ENCODE measurements at regions of chr1 and their contacts with region 1.

Region 1: DNA sequence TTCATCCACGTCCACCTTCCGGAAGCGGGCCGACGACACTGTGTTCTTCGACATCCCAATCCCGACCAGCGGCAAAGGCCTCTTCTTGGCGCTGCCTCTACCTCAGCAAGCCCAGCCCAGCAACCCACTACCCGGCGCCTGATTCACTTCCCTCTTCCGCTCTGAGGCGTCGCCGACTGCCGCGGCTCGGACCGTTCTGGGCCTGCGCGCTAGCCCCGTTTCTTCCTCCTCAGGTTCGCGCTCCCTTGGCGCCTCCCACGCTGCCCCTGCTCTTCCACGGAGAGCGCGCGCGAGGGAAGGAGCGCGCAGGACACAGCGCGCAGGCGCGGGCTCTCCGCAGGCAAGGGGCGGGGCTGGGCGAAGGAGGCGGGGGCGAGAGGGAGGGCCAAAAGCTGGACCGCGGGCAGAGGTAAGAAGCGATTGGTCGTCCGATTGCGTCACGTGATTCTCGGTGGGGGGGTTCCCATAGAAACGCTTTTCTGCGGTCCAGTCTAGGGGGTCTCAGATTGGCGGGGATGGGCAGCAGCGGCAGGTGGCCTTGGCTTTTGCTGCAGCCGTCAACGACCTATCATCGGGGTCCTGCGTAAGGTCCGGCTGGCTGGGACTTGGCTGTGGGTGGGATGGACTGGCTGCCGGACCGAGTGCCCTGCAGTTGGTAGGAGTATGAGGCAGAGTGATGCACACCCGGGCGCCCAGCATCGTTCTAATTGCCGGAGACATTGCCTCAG is at the start of gene ARPC5:
- DNase-seq: peak; percentile 95
- ATAC-seq: peak; percentile 86
- H3K4me3 ChIP-seq: peak within 1 kb of the TSS; percentile 93
- H3K27ac ChIP-seq: peak within 1 kb of the TSS; percentile 96
- H3K4me1 ChIP-seq: 0 out of 2 replicates have a peak, but pooled peaks cover 3% of the 10 kb centered on the region
- H3K27me3 ChIP-seq: no peaks in the 10 kb centered on the region
- CTCF ChIP-seq: no peak
- EP300 ChIP-seq: no peak
- POLR2A ChIP-seq: peak; percentile 93
- RAD21 ChIP-seq: no peak
- polyA plus RNA-seq, gene ARPC5: 246 to 274 TPM

Region 2: GRCh38 chr1:183646776-183647175 is 11.0 kb after region 1 on chr1:
- CTCF ChIA-PET with region 1: interaction called, 81 read pairs
- POLR2A ChIA-PET with region 1: interaction called, 21 read pairs
- RAD21 ChIA-PET with region 1: interaction called, 56 read pairs
- SMC1A ChIA-PET with region 1: interaction called, 70 read pairs
- in situ Hi-C with region 1: no loop called
- intact Hi-C with region 1: no loop called
- DNase-seq: no peak
- ATAC-seq: peak; percentile 43
- H3K4me3 ChIP-seq: no peak overlapping the region
- H3K27ac ChIP-seq: no peak overlapping the region
- H3K4me1 ChIP-seq: peaks cover 6% of the 10 kb centered on the region
- H3K27me3 ChIP-seq: no peaks in the 10 kb centered on the region
- CTCF ChIP-seq: no peak
- EP300 ChIP-seq: no peak
- POLR2A ChIP-seq: no peak
- RAD21 ChIP-seq: no peak

Region 3: GRCh38 chr1:183777328-183777727 is 141.6 kb after region 1 on chr1:
- CTCF ChIA-PET with region 1: no interaction called
- POLR2A ChIA-PET with region 1: no interaction called
- RAD21 ChIA-PET with region 1: no interaction called
- SMC1A ChIA-PET with region 1: no interaction called
- in situ Hi-C with region 1: no loop called
- intact Hi-C with region 1: no loop called
- DNase-seq: no peak
- ATAC-seq: no peak
- H3K4me3 ChIP-seq: no peak overlapping the region
- H3K27ac ChIP-seq: no peak overlapping the region
- H3K4me1 ChIP-seq: no peaks in the 10 kb centered on the region
- H3K27me3 ChIP-seq: no peaks in the 10 kb centered on the region
- CTCF ChIP-seq: no peak
- EP300 ChIP-seq: no peak
- POLR2A ChIP-seq: no peak
- RAD21 ChIP-seq: no peak